ENCODE measurements at regions of chr12 and their contacts with region 1.

Region 1: DNA sequence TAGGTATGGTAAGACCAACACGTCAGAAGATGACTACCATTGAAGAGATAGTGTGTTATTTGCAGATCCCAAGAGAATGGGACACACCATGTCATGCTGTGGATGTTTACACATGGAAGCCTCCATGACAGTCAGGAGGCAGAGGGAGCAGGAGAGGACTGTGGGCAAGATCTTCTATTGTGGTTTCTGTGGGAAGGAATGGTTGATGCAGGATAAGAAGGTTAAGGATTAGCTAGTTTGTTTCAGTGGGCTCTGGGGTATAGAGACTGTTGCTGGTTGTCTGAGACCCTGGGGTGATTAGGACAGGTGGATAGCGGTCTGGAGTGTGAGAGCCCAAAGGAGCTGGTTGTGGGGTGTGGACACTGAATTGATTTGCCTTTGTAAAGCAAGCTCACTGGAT is 23.3 kb downstream of the TAS2R7 start:
- DNase-seq: no peak
- ATAC-seq: no peak
- H3K4me3 ChIP-seq: no peak overlapping the region
- H3K27ac ChIP-seq: no peak overlapping the region
- H3K4me1 ChIP-seq: no peaks in the 10 kb centered on the region
- H3K27me3 ChIP-seq: peaks cover 0 to 10% (median 0%) of the 10 kb centered on the region in 9 donors
- CTCF ChIP-seq: no peak
- POLR2A ChIP-seq: no peak

Region 2: DNA sequence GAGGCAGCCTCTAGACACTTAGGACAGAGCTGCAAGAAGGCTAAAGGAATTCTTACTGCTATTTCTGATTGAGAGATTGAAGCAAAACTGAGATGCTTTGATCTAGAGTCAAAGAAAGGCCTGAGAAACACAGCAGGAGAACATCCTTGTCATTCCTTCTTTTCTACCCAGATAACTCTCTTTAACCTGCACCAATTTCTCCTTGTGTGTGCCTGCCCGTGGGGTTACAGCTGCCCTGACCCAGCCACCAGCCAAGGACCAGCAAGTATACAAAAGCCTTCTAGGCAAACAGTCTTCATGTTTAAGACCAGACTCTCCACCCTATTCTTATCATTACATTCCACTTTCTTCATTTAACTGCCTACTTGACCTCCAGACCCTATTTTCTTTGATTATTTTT is 698.0 kb after region 1 on chr12:
- intact Hi-C with region 1: loop called in 1 of 10 experiments (anchors 5 kb)
- DNase-seq: no peak
- ATAC-seq: no peak
- H3K4me3 ChIP-seq: no peak overlapping the region
- H3K27ac ChIP-seq: no peak overlapping the region
- H3K4me1 ChIP-seq: no peaks in the 10 kb centered on the region
- H3K27me3 ChIP-seq: no peaks in the 10 kb centered on the region
- CTCF ChIP-seq: no peak
- POLR2A ChIP-seq: no peak